ENCODE measurements at regions of chr10 and their contacts with region 1.

Region 1: DNA sequence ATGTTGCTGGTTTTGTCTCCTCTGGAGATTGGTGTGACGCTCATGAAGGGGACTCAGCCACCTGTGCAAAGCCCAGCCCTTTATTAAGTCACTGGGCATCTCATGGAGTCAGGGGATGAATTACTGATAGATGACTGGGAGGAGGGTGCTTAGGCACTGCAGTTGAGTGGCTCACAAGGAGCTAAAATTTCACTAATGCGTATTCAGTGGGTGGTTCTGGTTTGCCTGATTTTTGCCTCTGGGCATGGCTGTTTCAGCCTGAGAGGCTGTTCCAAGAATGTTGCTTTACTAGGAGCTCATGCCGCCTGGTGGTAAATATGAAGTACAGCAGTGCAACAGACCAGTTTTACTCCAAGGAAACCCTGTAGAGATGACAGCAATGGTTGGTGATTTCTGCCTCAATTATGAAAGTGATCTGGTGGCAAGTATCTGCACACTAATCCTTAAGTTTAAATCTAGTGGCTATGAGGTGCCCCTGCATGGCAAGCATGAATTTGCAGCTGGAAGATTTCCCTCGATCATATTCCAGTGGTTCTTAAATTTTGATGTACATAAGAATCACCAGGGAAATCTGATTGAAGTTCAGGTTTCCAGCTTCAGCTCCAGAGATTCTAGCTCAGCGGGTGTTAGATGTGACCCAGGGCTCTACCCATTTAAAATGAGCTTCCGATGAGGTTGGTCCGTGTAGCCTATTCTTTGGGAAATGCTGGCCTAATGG is 19.9 kb downstream of the ACTA2 start:
- DNase-seq: peak in 11 of 14 experiments; percentile 2 to 76 (median 20)
- ATAC-seq: peak; percentile 82
- H3K4me3 ChIP-seq: no peak overlapping the region
- H3K4me3 Mint-ChIP-seq: no peak overlapping the region
- H3K27ac ChIP-seq: no peak overlapping the region
- H3K27ac Mint-ChIP-seq: no peak overlapping the region
- H3K4me1 ChIP-seq: peaks cover 11% of the 10 kb centered on the region
- H3K4me1 Mint-ChIP-seq: peaks cover 21% of the 10 kb centered on the region
- H3K27me3 ChIP-seq: no peaks in the 10 kb centered on the region
- H3K27me3 Mint-ChIP-seq: no peaks in the 10 kb centered on the region
- CTCF ChIP-seq: peak; percentile 76

Region 2: DNA sequence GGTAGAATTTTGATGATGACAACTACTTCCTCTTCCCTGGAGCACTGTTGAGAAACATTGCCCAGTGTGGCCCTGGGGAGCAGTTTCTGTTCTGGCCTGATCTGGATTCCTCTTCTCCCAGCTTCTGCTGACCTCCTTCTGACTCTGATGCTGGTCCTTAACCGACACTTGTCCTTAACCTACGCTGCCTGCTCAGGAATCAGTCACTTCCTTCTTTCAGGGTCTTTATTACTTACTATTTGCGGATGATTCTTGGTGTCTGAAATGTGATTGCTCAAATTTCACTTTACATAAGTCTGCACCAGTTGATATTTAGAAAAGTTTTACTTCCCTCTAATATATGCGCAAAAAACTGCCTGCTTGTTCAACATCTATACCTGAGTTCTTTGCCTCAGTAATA is 905.1 kb before region 1 on chr10:
- CTCF ChIA-PET with region 1: no interaction called
- POLR2A ChIA-PET with region 1: no interaction called
- intact Hi-C with region 1: no loop called
- DNase-seq: peak in 3 of 14 experiments; percentile 27 to 51 (median 33)
- ATAC-seq: no peak
- H3K4me3 ChIP-seq: no peak overlapping the region
- H3K4me3 Mint-ChIP-seq: no peak overlapping the region
- H3K27ac ChIP-seq: no peak overlapping the region
- H3K27ac Mint-ChIP-seq: peak overlapping the region; percentile 73
- H3K4me1 ChIP-seq: peaks cover 8% of the 10 kb centered on the region
- H3K4me1 Mint-ChIP-seq: peaks cover 16% of the 10 kb centered on the region
- H3K27me3 ChIP-seq: no peaks in the 10 kb centered on the region
- H3K27me3 Mint-ChIP-seq: no peaks in the 10 kb centered on the region
- CTCF ChIP-seq: no peak

Region 3: GRCh38 chr10:88687853-88688467 is 244.7 kb before region 1 on chr10:
- CTCF ChIA-PET with region 1: no interaction called
- POLR2A ChIA-PET with region 1: no interaction called
- intact Hi-C with region 1: loop called (anchors 1 to 5 kb)
- DNase-seq: peak in 3 of 14 experiments; percentile 34 to 41 (median 34)
- ATAC-seq: peak; percentile 49
- H3K4me3 ChIP-seq: no peak overlapping the region
- H3K4me3 Mint-ChIP-seq: no peak overlapping the region
- H3K27ac ChIP-seq: no peak overlapping the region
- H3K27ac Mint-ChIP-seq: no peak overlapping the region
- H3K4me1 ChIP-seq: no peaks in the 10 kb centered on the region
- H3K4me1 Mint-ChIP-seq: no peaks in the 10 kb centered on the region
- H3K27me3 ChIP-seq: no peaks in the 10 kb centered on the region
- H3K27me3 Mint-ChIP-seq: peaks cover 2% of the 10 kb centered on the region
- CTCF ChIP-seq: peak; percentile 87

Region 4: DNA sequence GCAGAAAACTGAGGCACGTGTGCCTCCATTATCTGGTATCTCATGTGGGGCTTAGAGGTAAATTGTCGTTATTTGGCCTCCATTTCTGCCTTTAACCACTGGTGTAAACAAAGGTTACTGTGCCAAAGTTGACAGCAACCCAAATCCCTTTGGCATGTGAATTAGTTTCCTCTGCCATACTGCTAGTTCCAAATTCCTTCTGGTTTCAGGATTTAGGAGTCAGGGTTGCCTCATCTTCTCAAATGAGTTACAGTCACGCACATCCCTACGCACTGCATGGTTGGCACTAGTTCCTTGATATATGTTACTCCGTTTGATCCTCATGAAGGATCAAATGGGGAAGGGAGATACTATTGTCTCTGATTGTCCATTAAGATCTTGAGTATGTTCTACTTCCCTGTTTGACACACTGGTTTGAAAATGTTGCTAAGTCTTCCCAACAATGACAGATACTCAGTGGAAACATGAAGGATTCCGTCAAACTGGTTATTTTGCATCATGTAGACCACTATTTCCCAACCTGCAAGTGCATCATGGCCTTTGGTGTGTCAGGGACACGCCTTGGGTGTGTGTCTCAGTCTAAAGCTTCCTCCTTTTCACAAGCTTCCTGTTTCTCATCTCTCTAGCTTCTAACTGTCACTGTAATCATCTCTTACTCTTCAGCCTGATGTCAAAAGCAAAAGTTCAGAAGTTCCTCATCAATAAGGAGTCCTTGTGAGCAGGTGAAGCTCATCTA is 173.2 kb before region 1 on chr10 and contains the start of gene LIPN:
- CTCF ChIA-PET with region 1: no interaction called
- POLR2A ChIA-PET with region 1: no interaction called
- intact Hi-C with region 1: no loop called
- DNase-seq: peak in 3 of 14 experiments; percentile 23 to 71 (median 62)
- ATAC-seq: no peak
- H3K4me3 ChIP-seq: no peak within 1 kb of the TSS
- H3K4me3 Mint-ChIP-seq: no peak within 1 kb of the TSS
- H3K27ac ChIP-seq: no peak within 1 kb of the TSS
- H3K27ac Mint-ChIP-seq: no peak within 1 kb of the TSS
- H3K4me1 ChIP-seq: peaks cover 3% of the 10 kb centered on the region
- H3K4me1 Mint-ChIP-seq: peaks cover 6% of the 10 kb centered on the region
- H3K27me3 ChIP-seq: no peaks in the 10 kb centered on the region
- H3K27me3 Mint-ChIP-seq: no peaks in the 10 kb centered on the region
- CTCF ChIP-seq: no peak
- total RNA-seq, gene LIPN: not detected

Region 5: GRCh38 chr10:88880282-88881076 is 52.2 kb before region 1 on chr10:
- CTCF ChIA-PET with region 1: interaction called, 5 read pairs
- POLR2A ChIA-PET with region 1: interaction called, 22 read pairs
- intact Hi-C with region 1: no loop called
- DNase-seq: peak; percentile 53 to 86 (median 64)
- ATAC-seq: peak; percentile 72
- H3K4me3 ChIP-seq: peak overlapping the region; percentile 84
- H3K4me3 Mint-ChIP-seq: peak overlapping the region; percentile 99
- H3K27ac ChIP-seq: peak overlapping the region; percentile 76 to 77
- H3K27ac Mint-ChIP-seq: peak overlapping the region; percentile 91
- H3K4me1 ChIP-seq: peaks cover 25% of the 10 kb centered on the region
- H3K4me1 Mint-ChIP-seq: peaks cover 73% of the 10 kb centered on the region
- H3K27me3 ChIP-seq: no peaks in the 10 kb centered on the region
- H3K27me3 Mint-ChIP-seq: no peaks in the 10 kb centered on the region
- CTCF ChIP-seq: peak; percentile 15

Region 6: DNA sequence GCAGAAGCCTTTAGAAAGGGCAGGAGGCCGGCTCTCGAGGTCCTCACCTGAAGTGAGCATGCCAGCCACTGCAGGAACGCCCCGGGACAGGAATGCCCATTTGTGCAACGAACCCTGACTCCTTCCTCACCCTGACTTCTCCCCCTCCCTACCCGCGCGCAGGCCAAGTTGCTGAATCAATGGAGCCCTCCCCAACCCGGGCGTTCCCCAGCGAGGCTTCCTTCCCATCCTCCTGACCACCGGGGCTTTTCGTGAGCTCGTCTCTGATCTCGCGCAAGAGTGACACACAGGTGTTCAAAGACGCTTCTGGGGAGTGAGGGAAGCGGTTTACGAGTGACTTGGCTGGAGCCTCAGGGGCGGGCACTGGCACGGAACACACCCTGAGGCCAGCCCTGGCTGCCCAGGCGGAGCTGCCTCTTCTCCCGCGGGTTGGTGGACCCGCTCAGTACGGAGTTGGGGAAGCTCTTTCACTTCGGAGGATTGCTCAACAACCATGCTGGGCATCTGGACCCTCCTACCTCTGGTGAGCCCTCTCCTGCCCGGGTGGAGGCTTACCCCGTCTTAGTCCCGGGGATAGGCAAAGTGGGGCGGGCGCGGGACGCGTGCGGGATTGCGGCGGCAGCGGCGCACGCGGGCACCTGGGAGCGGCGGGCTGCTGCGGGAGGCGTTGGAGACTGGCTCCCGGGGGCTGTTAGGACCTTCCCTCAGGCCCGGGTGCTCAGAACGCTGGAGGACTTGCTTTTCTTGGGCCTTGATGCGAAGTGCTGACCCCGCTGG is 57.9 kb after region 1 on chr10 and contains the start of gene FAS:
- CTCF ChIA-PET with region 1: interaction called, 20 read pairs
- POLR2A ChIA-PET with region 1: interaction called, 4 read pairs
- intact Hi-C with region 1: loop called (anchors 1 to 2 kb)
- DNase-seq: peak; percentile 53 to 96 (median 75)
- ATAC-seq: peak; percentile 75
- H3K4me3 ChIP-seq: peak within 1 kb of the TSS; percentile 94
- H3K4me3 Mint-ChIP-seq: peak within 1 kb of the TSS; percentile 98
- H3K27ac ChIP-seq: peak within 1 kb of the TSS; percentile 80 to 89
- H3K27ac Mint-ChIP-seq: peak within 1 kb of the TSS; percentile 93
- H3K4me1 ChIP-seq: peaks cover 30% of the 10 kb centered on the region
- H3K4me1 Mint-ChIP-seq: peaks cover 80% of the 10 kb centered on the region
- H3K27me3 ChIP-seq: no peaks in the 10 kb centered on the region
- H3K27me3 Mint-ChIP-seq: no peaks in the 10 kb centered on the region
- CTCF ChIP-seq: no peak
- total RNA-seq, gene FAS: 23.8 to 28.2 TPM

Region 7: GRCh38 chr10:89019569-89020327 is 87.0 kb after region 1 on chr10:
- CTCF ChIA-PET with region 1: interaction called, 7 read pairs
- POLR2A ChIA-PET with region 1: interaction called, 3 read pairs
- intact Hi-C with region 1: loop called in 1 of 2 experiments (anchors 5 kb)
- DNase-seq: no peak
- ATAC-seq: no peak
- H3K4me3 ChIP-seq: no peak overlapping the region
- H3K4me3 Mint-ChIP-seq: no peak overlapping the region
- H3K27ac ChIP-seq: no peak overlapping the region
- H3K27ac Mint-ChIP-seq: no peak overlapping the region
- H3K4me1 ChIP-seq: no peaks in the 10 kb centered on the region
- H3K4me1 Mint-ChIP-seq: peaks cover 8% of the 10 kb centered on the region
- H3K27me3 ChIP-seq: no peaks in the 10 kb centered on the region
- H3K27me3 Mint-ChIP-seq: no peaks in the 10 kb centered on the region
- CTCF ChIP-seq: no peak

Region 8: DNA sequence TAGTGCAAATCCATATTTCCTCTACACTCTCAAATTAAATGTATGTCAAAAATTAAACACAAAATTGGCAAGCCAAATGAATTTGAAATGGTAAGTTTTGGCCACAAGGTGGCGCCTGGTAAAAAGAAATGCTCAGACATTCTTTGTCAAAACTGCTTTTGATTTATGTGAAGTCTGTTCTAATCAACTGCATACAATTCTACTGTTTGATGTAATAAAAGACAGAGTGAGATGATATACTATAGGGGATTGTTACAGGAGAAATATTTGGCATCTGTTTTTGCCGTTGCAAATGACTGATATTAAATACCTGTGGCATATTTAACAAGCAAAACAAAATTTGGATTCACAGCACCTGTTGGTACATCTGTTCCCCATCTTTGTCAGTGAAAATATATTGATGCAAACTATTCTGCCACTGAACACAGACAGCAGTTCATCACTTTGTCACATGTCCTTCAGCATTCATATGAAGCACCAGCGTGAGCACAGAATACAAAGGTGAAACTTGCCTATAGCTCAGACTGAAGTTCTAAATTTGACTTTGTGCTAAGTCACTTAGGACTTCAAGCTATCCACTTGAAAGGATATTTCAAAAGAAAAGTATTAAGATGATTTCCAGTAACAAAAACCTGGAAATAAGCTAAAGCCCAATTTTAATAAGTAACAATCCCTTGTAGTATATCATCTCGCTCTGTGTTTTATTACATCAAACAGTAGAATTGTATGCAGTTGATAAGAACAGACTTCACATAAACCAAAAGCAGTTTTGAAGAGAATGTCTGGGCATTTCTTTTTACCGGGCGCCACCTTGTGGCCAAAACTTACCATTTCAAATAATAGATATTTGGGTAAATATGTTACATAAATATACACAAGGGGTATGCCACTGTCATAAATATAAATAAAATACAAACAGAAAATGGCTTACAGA is 284.6 kb after region 1 on chr10:
- CTCF ChIA-PET with region 1: interaction called, 17 read pairs
- POLR2A ChIA-PET with region 1: interaction called, 3 read pairs
- intact Hi-C with region 1: loop called (anchors 1 kb)
- DNase-seq: peak; percentile 39 to 80 (median 58)
- ATAC-seq: peak; percentile 69
- H3K4me3 ChIP-seq: no peak overlapping the region
- H3K4me3 Mint-ChIP-seq: no peak overlapping the region
- H3K27ac ChIP-seq: no peak overlapping the region
- H3K27ac Mint-ChIP-seq: peak overlapping the region; percentile 73
- H3K4me1 ChIP-seq: peaks cover 3% of the 10 kb centered on the region
- H3K4me1 Mint-ChIP-seq: peaks cover 10% of the 10 kb centered on the region
- H3K27me3 ChIP-seq: no peaks in the 10 kb centered on the region
- H3K27me3 Mint-ChIP-seq: peaks cover 3% of the 10 kb centered on the region
- CTCF ChIP-seq: peak; percentile 77

Measured in CD4-positive, alpha-beta T cell (primary cell).